B cell (primary cell): ENCODE measurements at regions of chr19 and their contacts with region 1.

Region 1: DNA sequence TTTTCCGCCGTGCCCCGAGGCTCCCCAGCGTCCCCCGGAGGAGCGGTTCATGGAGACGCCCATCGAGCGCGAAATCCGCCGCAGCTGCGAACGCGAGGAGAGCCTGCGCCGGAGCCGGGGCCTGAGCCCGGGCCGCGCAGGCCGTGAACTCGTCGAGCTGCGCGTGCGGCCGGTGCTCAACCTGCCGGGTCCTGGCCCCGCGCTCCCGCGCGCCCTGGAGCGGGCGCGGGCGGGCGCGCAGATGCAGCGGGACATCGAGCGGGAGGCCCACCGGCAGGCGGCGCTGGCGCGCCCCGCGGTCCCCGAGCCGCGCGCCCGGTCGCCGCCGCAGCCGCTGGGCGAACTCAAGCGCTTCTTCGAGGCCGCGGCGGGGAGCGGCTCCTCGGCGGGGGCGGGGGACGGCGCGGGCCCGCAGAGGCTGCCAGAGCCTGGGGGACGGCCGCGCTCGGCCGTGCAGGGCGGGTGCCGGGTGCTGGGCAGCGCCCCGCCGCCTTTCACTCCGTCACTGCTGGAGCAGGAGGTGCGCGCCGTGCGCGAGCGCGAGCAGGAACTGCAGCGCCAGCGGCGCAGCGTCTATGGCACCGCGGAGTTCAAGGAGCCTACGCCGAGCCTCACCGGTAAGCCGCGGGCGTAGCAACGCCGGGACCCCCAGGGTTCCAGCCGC is 807 bp downstream of the MISP3 start:
- DNase-seq: peak; percentile 92
- ATAC-seq: peak; percentile 64
- H3K4me3 ChIP-seq: peak overlapping the region; percentile 47 to 79 (median 59)
- H3K4me3 Mint-ChIP-seq: peak overlapping the region; percentile 87
- H3K27ac ChIP-seq: no peak overlapping the region
- H3K27ac Mint-ChIP-seq: peak overlapping the region; percentile 34
- H3K4me1 ChIP-seq: peaks cover 31 to 35% of the 10 kb centered on the region in 2 donors
- H3K4me1 Mint-ChIP-seq: peaks cover 26% of the 10 kb centered on the region
- H3K27me3 ChIP-seq: peaks cover 0 to 18% (median 5%) of the 10 kb centered on the region in 4 experiments
- H3K27me3 Mint-ChIP-seq: peaks cover 5% of the 10 kb centered on the region
- CTCF ChIP-seq: peak; percentile 44

Region 2: DNA sequence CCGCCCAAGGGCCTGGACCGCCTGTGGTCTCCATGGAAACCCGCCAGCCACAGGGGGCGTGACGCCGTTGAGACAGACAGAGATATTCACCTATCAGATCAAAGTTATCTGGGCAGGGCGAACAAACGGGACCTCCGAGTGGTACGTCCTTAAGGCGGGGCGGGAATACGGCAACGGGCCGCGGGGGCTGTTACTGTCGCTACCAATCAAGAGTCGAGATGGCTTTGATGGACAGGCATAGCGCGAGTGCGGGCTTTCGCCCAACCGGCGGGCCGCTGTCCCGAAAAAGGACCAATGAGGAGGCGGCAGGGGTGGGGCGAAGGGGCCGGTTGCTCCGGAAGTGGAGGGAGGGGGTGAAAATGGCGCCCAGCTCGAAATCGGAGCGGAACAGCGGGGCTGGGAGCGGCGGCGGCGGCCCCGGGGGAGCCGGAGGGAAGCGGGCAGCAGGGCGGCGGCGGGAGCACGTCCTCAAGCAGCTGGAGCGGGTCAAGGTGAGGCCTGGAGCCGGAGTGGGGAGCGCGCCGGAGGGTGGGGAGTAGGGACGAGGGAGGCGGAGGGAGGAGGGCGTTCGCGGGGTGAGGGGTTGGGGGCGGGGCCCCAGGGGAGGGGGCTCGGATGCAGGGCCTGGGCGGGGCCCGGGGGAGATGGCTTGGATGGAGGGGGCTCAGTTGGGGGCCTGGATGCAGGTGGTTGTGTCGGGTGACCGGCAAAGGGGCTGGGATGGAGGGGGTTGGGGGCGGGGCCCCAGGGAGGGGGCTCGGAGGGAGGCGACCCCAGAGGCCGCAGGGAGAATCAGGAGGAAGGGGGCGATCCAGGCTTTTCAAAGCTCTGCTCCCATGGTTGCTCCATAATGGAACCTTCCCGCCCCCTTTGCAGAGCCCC is 121.0 kb before region 1 on chr19 and contains the start of gene DCAF15:
- CTCF ChIA-PET with region 1: interaction called, 4 read pairs
- POLR2A ChIA-PET with region 1: no interaction called
- intact Hi-C with region 1: loop called (anchors 5 kb)
- DNase-seq: peak; percentile 100
- ATAC-seq: peak; percentile 95
- H3K4me3 ChIP-seq: peak within 1 kb of the TSS; percentile 55 to 98 (median 76)
- H3K4me3 Mint-ChIP-seq: peak within 1 kb of the TSS; percentile 96
- H3K27ac ChIP-seq: peak within 1 kb of the TSS; percentile 34 to 85
- H3K27ac Mint-ChIP-seq: peak within 1 kb of the TSS; percentile 96
- H3K4me1 ChIP-seq: peaks cover 15 to 18% of the 10 kb centered on the region in 2 donors
- H3K4me1 Mint-ChIP-seq: peaks cover 21% of the 10 kb centered on the region
- H3K27me3 ChIP-seq: no peaks in the 10 kb centered on the region
- H3K27me3 Mint-ChIP-seq: no peaks in the 10 kb centered on the region
- CTCF ChIP-seq: no peak
- total RNA-seq, gene DCAF15: 115 and 116 TPM in 2 replicates

Region 3: GRCh38 chr19:14048443-14049153 is 24.8 kb before region 1 on chr19:
- CTCF ChIA-PET with region 1: interaction called, 15 read pairs
- POLR2A ChIA-PET with region 1: interaction called, 5 read pairs
- intact Hi-C with region 1: no loop called
- DNase-seq: peak; percentile 80
- ATAC-seq: peak; percentile 92
- H3K4me3 ChIP-seq: no peak overlapping the region
- H3K4me3 Mint-ChIP-seq: no peak overlapping the region
- H3K27ac ChIP-seq: no peak overlapping the region
- H3K27ac Mint-ChIP-seq: no peak overlapping the region
- H3K4me1 ChIP-seq: no peaks in the 10 kb centered on the region
- H3K4me1 Mint-ChIP-seq: no peaks in the 10 kb centered on the region
- H3K27me3 ChIP-seq: no peaks in the 10 kb centered on the region
- H3K27me3 Mint-ChIP-seq: no peaks in the 10 kb centered on the region
- CTCF ChIP-seq: peak; percentile 95

Region 4: GRCh38 chr19:14091081-14091812 is 17.9 kb after region 1 on chr19:
- CTCF ChIA-PET with region 1: interaction called, 6 read pairs
- POLR2A ChIA-PET with region 1: no interaction called
- intact Hi-C with region 1: loop called (anchors 1 kb)
- DNase-seq: peak; percentile 89
- ATAC-seq: peak; percentile 72
- H3K4me3 ChIP-seq: peak overlapping the region; percentile 81 to 89 (median 82)
- H3K4me3 Mint-ChIP-seq: peak overlapping the region; percentile 100
- H3K27ac ChIP-seq: peak overlapping the region; percentile 69 to 87
- H3K27ac Mint-ChIP-seq: peak overlapping the region; percentile 99
- H3K4me1 ChIP-seq: peaks cover 11 to 18% of the 10 kb centered on the region in 2 donors
- H3K4me1 Mint-ChIP-seq: peaks cover 15% of the 10 kb centered on the region
- H3K27me3 ChIP-seq: no peaks in the 10 kb centered on the region
- H3K27me3 Mint-ChIP-seq: no peaks in the 10 kb centered on the region
- CTCF ChIP-seq: peak; percentile 21